Mammary epithelial cell (primary cell): ENCODE measurements at regions of chr18 and their contacts with region 1.

Region 1: GRCh38 chr18:76982841-76983587 is 149.6 kb downstream of the MBP start:
- DNase-seq: peak; percentile 87
- H3K4me3 ChIP-seq: no peak overlapping the region
- H3K27ac ChIP-seq: no peak overlapping the region
- H3K4me1 ChIP-seq: peaks cover 4% of the 10 kb centered on the region
- H3K27me3 ChIP-seq: no peaks in the 10 kb centered on the region
- CTCF ChIP-seq: peak; percentile 88 to 94

Region 2: DNA sequence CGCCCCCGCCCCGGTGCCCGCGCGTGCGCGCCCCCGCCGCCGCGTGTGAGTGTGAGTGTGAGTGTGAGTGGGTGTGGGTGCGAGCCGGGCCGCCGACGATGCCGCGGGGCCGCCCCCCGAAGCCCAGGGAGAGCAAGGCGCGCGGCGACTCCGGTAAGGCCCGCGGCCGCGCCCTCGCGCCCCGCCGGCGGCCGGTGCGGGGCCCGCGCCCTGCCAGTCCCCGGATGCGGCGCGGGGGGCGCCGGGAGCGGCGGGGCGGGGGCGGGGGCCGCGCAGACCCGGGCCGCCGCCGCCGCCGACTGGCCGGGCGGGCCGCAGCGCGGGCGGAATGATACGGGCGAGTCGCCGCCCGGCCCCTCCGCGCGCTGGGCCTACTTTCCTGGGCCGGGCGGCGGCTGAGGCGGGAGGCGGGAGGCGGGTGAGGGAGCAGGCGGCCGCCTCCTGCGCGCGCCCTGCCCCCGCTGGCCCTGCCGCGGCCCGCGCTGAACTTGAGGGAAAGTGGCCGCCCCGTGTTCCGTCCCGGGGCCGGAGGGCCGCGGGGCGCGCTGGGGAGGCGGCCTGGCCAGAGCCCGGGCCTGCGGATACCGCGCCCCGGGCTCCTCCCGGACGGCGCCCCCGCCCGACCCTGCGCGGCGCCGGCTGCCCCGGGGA is 160.4 kb before region 1 on chr18 and contains the start of gene ZNF236:
- CTCF ChIA-PET with region 1: no interaction called
- dilution Hi-C with region 1: no loop called
- in situ Hi-C with region 1: no loop called
- intact Hi-C with region 1: loop called (anchors 1 kb)
- DNase-seq: peak; percentile 67
- H3K4me3 ChIP-seq: peak within 1 kb of the TSS; percentile 84 to 95 (median 94)
- H3K27ac ChIP-seq: peak within 1 kb of the TSS; percentile 81
- H3K4me1 ChIP-seq: peaks cover 12% of the 10 kb centered on the region
- H3K27me3 ChIP-seq: no peaks in the 10 kb centered on the region
- CTCF ChIP-seq: no peak
- total RNA-seq, gene ZNF236: 10.2 to 13.0 TPM

Region 3: DNA sequence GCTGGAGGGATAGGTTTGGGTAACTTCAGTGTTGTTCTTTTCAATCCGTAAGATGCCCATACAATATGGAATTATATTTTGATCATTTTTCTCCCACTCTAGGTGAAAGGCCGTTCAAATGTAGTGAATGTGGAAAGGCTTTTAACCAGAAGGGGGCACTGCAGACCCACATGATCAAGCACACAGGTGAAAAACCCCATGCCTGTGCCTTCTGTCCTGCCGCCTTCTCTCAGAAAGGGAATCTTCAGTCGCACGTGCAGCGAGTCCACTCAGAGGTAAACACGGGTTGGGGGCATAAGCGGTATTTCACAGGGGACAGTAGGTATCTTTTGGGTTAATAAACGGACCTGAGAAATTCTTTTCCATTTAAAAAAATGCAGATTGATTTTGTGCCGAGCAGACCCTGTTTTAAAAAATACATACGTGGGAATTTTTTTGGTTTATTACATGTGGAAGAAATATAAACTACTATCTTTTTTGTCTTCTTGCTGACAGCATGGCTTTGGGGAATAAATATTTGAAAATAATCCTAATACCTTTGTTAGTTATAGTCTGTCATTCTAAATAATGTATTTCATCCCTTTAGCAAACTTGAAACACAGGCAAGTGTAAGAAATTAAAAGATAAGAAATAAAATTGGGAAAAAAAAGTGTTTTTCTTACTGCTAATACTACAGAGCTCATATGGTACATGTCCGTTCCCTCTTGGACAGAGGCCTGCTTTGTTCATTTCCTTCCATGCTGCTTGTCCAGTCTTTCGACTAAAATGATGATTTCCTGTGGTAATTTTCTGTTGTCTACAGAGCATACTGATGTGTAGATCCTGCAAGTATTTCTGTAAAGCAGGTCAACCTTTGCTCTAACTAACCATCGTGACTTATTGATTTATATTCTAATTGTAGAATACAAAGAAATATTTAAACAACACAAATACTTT is 107.4 kb before region 1 on chr18:
- CTCF ChIA-PET with region 1: no interaction called
- dilution Hi-C with region 1: no loop called
- in situ Hi-C with region 1: no loop called
- intact Hi-C with region 1: loop called (anchors 1 kb)
- DNase-seq: peak; percentile 20
- H3K4me3 ChIP-seq: no peak overlapping the region
- H3K27ac ChIP-seq: no peak overlapping the region
- H3K4me1 ChIP-seq: no peaks in the 10 kb centered on the region
- H3K27me3 ChIP-seq: no peaks in the 10 kb centered on the region
- CTCF ChIP-seq: peak; percentile 60 to 64

Region 4: DNA sequence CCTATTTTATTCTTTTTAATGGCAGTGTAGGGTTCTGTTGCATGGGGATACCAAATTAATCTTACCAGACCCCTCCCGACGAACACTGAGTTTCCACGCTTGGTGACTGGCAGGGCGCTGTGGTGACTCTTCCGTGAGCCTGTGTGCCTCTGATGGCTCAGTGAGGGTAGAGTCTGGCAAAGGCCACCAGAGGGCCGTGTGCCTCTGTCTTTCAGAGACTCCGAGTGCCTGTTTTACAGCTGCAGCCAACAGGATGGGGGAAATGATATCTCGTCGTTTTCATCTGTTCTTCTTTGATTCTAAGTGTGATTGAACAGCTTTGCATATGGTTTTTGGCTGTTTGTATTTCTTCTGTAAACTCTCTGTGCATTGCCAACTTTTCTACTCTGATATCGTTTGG is 60.9 kb before region 1 on chr18:
- CTCF ChIA-PET with region 1: no interaction called
- dilution Hi-C with region 1: no loop called
- in situ Hi-C with region 1: no loop called
- intact Hi-C with region 1: loop called (anchors 1 kb)
- DNase-seq: peak; percentile 1
- H3K4me3 ChIP-seq: no peak overlapping the region
- H3K27ac ChIP-seq: no peak overlapping the region
- H3K4me1 ChIP-seq: no peaks in the 10 kb centered on the region
- H3K27me3 ChIP-seq: no peaks in the 10 kb centered on the region
- CTCF ChIP-seq: peak; percentile 33 to 56

Region 5: DNA sequence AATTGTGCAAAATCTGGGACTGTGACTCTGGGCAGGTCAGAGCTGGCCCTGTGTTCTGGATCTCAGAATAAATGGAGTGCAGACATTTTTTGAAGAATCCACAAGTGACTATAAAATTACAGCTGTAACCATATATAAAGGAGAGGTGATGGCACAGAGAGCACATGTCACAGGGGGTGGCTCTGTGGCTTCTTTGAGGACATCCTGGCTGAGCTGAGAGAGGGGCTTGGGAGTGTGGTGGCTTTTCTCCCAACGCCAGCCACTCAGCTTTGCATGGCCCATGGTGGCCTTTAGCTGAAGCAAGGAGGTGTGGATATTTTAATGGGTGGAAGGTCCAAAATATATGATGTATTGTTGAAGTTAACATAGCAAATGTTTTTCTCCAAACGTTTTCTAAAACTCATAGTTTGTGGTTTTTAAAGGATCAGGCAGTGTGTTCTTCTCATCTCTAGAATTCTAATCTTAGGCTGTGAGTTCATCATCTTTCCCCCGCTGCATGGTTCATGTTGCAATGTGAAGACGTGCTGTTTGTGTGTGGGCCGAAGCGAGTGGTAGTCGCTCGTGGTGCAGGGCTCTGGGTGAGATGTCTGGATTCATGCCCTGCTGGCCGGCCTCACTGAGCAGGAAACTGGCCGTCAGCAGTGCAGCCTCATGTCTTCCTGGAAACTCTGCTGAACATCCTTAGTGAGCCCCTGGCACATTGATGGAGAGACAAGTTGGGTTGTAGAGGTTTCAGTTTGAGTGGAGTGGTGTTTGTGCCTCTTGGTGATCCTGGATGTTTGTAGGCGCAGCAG is 50.8 kb before region 1 on chr18:
- CTCF ChIA-PET with region 1: no interaction called
- dilution Hi-C with region 1: no loop called
- in situ Hi-C with region 1: no loop called
- intact Hi-C with region 1: no loop called
- DNase-seq: no peak
- H3K4me3 ChIP-seq: no peak overlapping the region
- H3K27ac ChIP-seq: no peak overlapping the region
- H3K4me1 ChIP-seq: no peaks in the 10 kb centered on the region
- H3K27me3 ChIP-seq: no peaks in the 10 kb centered on the region
- CTCF ChIP-seq: no peak

Region 6: DNA sequence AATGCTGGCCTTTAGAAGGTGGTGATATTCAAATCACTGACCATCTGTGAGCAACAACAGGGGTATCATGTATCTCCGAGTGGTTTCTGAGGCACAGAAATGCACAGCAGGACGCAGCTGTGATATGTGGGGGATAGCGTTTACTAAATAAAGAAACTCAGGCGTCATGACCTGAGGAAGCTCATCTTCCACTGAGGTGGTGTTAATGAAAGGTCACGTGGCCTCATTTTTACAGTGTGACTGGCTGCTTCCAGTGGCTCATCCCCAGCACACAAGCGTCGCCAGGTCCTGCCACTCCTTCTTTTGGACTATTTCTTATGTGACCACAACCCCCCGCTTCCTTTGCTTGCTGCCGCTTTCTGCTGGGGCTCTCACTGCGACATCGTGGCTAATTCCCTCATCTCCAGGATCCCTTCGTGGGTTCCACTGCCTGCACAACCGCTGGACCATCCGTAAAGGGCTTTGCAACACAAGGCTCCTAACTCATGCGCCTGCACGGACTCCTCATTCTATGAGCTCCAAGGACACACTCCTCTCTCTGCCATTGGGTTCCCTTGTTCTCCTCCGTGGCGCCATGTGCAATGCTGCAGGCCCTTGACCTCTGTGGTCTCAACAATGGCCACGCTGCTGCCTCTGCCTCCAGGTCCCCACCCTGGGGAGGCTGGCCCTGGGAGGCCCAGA is 40.2 kb after region 1 on chr18:
- CTCF ChIA-PET with region 1: no interaction called
- dilution Hi-C with region 1: loop called (anchors 5 kb)
- in situ Hi-C with region 1: no loop called
- intact Hi-C with region 1: no loop called
- DNase-seq: no peak
- H3K4me3 ChIP-seq: no peak overlapping the region
- H3K27ac ChIP-seq: no peak overlapping the region
- H3K4me1 ChIP-seq: no peaks in the 10 kb centered on the region
- H3K27me3 ChIP-seq: no peaks in the 10 kb centered on the region
- CTCF ChIP-seq: no peak

Region 7: DNA sequence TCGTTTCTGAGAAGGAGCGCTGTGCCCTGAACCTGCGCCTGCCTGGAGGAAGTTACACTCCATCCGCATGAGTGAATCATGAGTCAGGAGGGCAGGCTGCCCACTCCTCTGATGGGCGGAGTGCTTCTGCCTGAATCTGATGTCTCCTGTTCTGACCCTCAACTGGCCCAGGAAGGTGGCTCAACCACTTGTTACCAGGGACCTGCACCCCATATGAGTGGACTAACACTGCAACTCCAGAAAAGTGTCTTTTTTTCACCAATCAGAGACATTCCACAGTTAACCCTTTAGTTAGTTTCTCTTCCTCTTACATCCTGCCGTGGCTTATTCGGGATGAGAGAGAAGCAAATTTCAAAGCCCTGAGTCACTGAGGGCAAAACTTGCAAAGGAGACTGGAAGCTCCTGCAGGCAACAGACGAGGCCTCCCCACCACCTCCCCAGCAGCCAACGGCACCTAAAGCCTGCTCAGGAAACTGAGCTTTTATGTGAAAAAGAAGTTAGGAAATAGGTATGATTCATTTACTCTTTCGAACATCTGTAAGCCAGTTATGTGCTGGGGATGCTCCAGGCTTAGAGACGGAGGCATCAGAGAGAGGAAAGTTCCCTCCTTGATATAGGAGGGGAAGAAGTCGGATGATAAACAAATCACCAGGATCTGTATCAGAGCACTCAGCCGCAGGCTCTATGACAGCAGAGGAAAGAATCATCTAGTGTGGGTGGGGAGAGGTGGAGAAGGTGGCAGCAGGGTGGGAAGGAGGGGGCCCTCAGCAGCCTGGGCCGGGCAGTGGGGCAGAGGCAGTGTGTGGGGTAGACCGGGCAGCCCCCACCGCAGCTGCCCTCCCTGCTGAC is 118.6 kb after region 1 on chr18:
- CTCF ChIA-PET with region 1: no interaction called
- dilution Hi-C with region 1: no loop called
- in situ Hi-C with region 1: no loop called
- intact Hi-C with region 1: no loop called
- DNase-seq: peak; percentile 98
- H3K4me3 ChIP-seq: peak overlapping the region; percentile 1 to 26 (median 1)
- H3K27ac ChIP-seq: peak overlapping the region; percentile 97
- H3K4me1 ChIP-seq: peaks cover 56% of the 10 kb centered on the region
- H3K27me3 ChIP-seq: no peaks in the 10 kb centered on the region
- CTCF ChIP-seq: no peak

Region 8: DNA sequence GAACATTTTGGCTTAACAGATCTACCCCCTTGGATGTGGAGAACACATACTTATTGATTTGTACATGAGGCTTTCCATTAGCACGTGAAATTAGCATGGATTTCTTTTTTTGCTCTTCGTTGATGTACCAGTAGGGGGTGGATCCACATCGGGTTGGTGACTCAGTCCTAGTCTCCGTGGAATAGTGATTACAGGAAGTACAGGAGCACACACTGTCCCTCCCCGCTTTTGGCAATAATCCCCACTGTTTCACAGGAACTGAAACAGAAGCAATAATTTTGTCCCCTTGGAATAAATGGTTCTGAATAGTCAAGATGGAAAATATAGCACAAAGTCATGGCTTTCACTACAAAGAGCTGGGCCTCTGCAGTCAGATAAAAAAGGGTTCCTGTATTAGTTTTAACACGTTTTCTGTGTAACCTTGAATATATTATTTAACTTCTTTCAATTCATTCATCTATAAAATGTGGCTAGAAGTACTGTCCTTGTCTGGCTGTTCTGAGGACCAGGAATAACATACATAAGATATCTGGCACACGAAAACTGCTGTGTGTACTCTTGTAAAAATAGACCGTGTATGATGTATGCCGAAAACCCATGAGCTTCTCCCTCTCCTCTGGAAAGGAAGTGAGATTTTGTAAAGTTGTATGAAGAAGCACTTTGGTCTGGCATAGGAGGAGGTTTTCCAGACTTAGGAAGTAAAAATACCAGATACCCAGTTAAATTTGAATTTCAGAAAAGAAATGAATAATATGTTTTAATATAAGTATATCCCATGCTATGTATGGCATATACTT is 495.8 kb after region 1 on chr18:
- CTCF ChIA-PET with region 1: no interaction called
- dilution Hi-C with region 1: no loop called
- in situ Hi-C with region 1: no loop called
- intact Hi-C with region 1: no loop called
- DNase-seq: no peak
- H3K4me3 ChIP-seq: no peak overlapping the region
- H3K27ac ChIP-seq: no peak overlapping the region
- H3K4me1 ChIP-seq: no peaks in the 10 kb centered on the region
- H3K27me3 ChIP-seq: no peaks in the 10 kb centered on the region
- CTCF ChIP-seq: no peak